Activated CD4-positive, alpha-beta memory T cell treated with anti-CD3 and anti-CD28 coated beads for 36 hours (primary cell): ENCODE measurements at regions of chrX and their contacts with region 1.

Region 1: DNA sequence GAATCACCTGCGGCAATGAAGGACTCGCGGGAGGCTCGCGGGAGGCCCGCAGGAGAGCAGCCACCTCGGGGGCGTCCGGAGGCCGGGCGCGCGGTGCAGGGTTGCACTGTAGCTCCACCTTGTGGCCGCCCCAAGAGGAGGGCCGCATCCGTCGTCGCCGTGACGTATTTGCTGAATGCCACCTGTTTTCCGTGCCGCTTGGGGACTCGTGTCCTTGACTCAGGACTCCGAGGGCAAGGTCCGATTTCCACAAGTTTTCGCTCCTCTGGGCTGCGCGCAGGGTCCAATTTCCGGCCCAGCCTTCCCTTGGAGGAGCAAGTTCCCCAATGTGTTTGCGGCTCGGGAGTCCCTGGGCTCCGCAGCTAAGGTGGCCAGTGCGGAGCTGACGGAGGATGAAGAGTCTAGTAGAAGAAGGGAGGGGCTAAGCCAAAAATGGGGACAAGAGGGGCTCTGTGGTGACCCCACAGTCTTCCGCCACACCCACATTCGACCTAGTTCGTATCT is 10.7 kb upstream of the DLG3 start:
- DNase-seq: peak; percentile 83
- H3K4me3 Mint-ChIP-seq: peak overlapping the region; percentile 86
- H3K27ac Mint-ChIP-seq: peak overlapping the region; percentile 80
- H3K4me1 Mint-ChIP-seq: peaks cover 7% of the 10 kb centered on the region
- H3K27me3 Mint-ChIP-seq: peaks cover 2% of the 10 kb centered on the region

Region 2: GRCh38 chrX:70133303-70134115 is 300.4 kb before region 1 on chrX and contains the start of gene IGBP1:
- CTCF ChIA-PET with region 1: interaction called, 4 read pairs
- POLR2A ChIA-PET with region 1: interaction called, 5 read pairs
- intact Hi-C with region 1: loop called (anchors 1 kb)
- DNase-seq: peak; percentile 85
- H3K4me3 Mint-ChIP-seq: peak within 1 kb of the TSS; percentile 98
- H3K27ac Mint-ChIP-seq: peak within 1 kb of the TSS; percentile 96
- H3K4me1 Mint-ChIP-seq: peaks cover 24% of the 10 kb centered on the region
- H3K27me3 Mint-ChIP-seq: no peaks in the 10 kb centered on the region
- total RNA-seq, gene IGBP1: 50.8 to 51.5 TPM

Region 3: DNA sequence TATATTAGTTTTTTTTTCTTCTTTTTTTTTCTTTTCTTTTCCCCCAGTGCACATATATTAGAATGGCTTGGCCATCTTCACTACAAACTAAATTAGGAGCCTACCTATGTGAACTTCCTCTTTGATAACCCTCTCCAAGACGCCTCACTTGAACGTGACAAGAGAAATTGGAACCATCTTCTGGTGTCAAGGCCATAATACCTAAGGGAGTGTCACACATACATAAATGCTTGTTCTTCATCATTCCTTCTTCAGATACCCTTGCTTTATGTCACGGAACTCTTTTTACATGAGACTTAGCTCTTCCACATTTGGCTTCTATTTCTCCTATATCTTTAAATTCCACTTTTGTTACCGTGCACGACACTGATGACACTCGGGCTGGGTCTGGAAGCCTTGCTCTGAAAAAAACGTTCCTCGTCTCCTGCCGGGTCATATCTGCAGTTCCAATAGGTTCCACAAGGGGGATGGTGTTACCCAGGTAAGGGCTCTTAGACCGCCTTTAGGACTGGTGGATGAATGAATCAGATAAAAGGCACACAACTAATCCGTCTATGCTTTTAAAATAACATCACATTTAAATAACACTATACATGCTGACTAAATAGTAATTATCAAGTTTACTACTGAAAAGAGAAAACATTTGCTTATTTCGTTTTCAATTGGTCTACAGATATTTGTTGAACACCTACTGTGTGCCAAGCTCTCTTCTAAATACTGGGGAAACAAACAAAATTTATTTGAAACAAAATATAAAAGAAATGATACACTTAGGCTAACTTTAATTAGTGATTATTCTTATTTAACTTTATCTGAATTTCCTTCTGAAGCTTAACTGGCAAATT is 236.7 kb before region 1 on chrX:
- CTCF ChIA-PET with region 1: interaction called, 14 read pairs
- POLR2A ChIA-PET with region 1: no interaction called
- intact Hi-C with region 1: loop called (anchors 1 kb)
- DNase-seq: peak; percentile 68
- H3K4me3 Mint-ChIP-seq: no peak overlapping the region
- H3K27ac Mint-ChIP-seq: no peak overlapping the region
- H3K4me1 Mint-ChIP-seq: peaks cover 2% of the 10 kb centered on the region
- H3K27me3 Mint-ChIP-seq: peaks cover 2% of the 10 kb centered on the region

Region 4: GRCh38 chrX:70289793-70290776 is 143.8 kb before region 1 on chrX and contains the starts of genes KIF4A and PDZD11:
- CTCF ChIA-PET with region 1: interaction called, 5 read pairs
- POLR2A ChIA-PET with region 1: interaction called, 5 read pairs
- intact Hi-C with region 1: loop called (anchors 1 kb)
- DNase-seq: peak; percentile 90
- H3K4me3 Mint-ChIP-seq: peak within 1 kb of the TSS; percentile 91
- H3K27ac Mint-ChIP-seq: peak within 1 kb of the TSS; percentile 74
- H3K4me1 Mint-ChIP-seq: peaks cover 10% of the 10 kb centered on the region
- H3K27me3 Mint-ChIP-seq: no peaks in the 10 kb centered on the region
- total RNA-seq, gene KIF4A: 26.4 to 28.3 TPM
- total RNA-seq, gene PDZD11: 25.9 to 28.1 TPM

Region 5: DNA sequence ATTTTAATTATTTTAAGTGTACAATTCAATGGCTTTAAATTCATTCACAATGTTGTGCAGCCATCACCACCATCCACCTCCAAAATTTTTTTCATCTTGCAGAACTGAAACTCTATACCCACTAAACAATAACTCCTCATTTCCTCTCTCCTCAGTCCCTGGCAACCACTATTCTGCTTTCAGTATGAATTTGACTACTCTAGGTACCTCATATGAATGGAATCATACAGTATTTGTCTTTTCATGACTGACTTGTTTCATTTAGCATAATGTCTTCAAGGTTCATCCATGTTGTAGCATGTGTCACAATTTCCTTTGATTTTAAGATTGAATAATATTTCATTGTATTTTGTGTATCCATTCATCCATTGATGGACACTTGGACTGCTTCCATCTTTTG is 97.1 kb before region 1 on chrX:
- CTCF ChIA-PET with region 1: no interaction called
- POLR2A ChIA-PET with region 1: no interaction called
- intact Hi-C with region 1: loop called (anchors 1 kb)
- DNase-seq: no peak
- H3K4me3 Mint-ChIP-seq: no peak overlapping the region
- H3K27ac Mint-ChIP-seq: no peak overlapping the region
- H3K4me1 Mint-ChIP-seq: peaks cover 7% of the 10 kb centered on the region
- H3K27me3 Mint-ChIP-seq: no peaks in the 10 kb centered on the region

Region 6: GRCh38 chrX:70422851-70423341 is 11.0 kb before region 1 on chrX and contains the start of gene GDPD2:
- CTCF ChIA-PET with region 1: interaction called, 11 read pairs
- POLR2A ChIA-PET with region 1: no interaction called
- intact Hi-C with region 1: no loop called
- DNase-seq: no peak
- H3K4me3 Mint-ChIP-seq: no peak within 1 kb of the TSS
- H3K27ac Mint-ChIP-seq: no peak within 1 kb of the TSS
- H3K4me1 Mint-ChIP-seq: no peaks in the 10 kb centered on the region
- H3K27me3 Mint-ChIP-seq: no peaks in the 10 kb centered on the region
- total RNA-seq, gene GDPD2: not detected